ENCODE measurements at regions of chr2 and their contacts with region 1.

Region 1: DNA sequence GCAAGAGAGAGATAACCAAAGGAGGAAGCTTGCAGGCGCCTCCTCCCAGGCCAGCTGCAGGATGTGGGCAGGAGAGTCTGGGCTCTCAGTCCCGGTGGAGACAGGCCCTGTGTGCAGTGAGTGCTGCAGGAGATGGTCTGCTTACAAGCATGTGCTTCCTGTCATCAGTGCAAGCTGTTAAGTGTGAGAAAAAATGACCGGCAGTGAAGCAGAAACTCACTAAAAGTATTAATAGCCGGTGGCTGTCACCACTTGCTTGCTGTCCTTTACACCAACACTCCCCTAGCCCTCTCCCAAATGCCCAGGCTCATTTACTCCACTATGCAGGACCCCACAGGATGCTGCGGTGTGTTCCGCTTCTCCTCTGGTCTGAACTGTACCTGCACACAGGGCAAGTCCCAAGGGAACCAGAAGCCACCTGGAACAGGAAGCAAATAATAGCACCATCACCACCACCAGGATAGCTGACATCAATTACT is 435.6 kb upstream of the HS6ST1 start:
- DNase-seq: no peak
- H3K4me3 ChIP-seq: no peak overlapping the region
- H3K27ac ChIP-seq: no peak overlapping the region
- H3K4me1 ChIP-seq: peaks cover 0 to 2% (median 0%) of the 10 kb centered on the region in 4 experiments; a peak in 1 of 7 replicates
- H3K27me3 ChIP-seq: no peaks in the 10 kb centered on the region
- CTCF ChIP-seq: no peak
- EP300 ChIP-seq: no peak
- POLR2A ChIP-seq: no peak
- RAD21 ChIP-seq: no peak

Region 2: GRCh38 chr2:128736689-128737545 is 17.4 kb before region 1 on chr2:
- CTCF ChIA-PET with region 1: interaction called, 13 read pairs
- POLR2A ChIA-PET with region 1: no interaction called
- DNase-seq: peak; percentile 50 to 95
- H3K4me3 ChIP-seq: peak overlapping the region; percentile 22 to 57 (median 36); a peak in 7 of 8 replicates
- H3K27ac ChIP-seq: no peak overlapping the region
- H3K4me1 ChIP-seq: no peaks in the 10 kb centered on the region; a peak in 3 of 7 replicates
- H3K27me3 ChIP-seq: peaks cover 0 to 11% (median 9%) of the 10 kb centered on the region in 4 experiments; a peak in 6 of 7 replicates
- CTCF ChIP-seq: peak; percentile 89 to 94 (median 93)
- EP300 ChIP-seq: no peak
- POLR2A ChIP-seq: no peak
- RAD21 ChIP-seq: peak; percentile 86 to 90

Region 3: GRCh38 chr2:128765811-128766210 is 11.5 kb after region 1 on chr2:
- CTCF ChIA-PET with region 1: interaction called, 13 read pairs
- POLR2A ChIA-PET with region 1: no interaction called
- DNase-seq: peak in 1 of 2 experiments; percentile 29
- H3K4me3 ChIP-seq: no peak overlapping the region
- H3K27ac ChIP-seq: no peak overlapping the region
- H3K4me1 ChIP-seq: peaks cover 0 to 7% (median 0%) of the 10 kb centered on the region in 4 experiments; a peak in 2 of 7 replicates
- H3K27me3 ChIP-seq: no peaks in the 10 kb centered on the region
- CTCF ChIP-seq: no peak
- EP300 ChIP-seq: no peak
- POLR2A ChIP-seq: no peak
- RAD21 ChIP-seq: no peak

Region 4: DNA sequence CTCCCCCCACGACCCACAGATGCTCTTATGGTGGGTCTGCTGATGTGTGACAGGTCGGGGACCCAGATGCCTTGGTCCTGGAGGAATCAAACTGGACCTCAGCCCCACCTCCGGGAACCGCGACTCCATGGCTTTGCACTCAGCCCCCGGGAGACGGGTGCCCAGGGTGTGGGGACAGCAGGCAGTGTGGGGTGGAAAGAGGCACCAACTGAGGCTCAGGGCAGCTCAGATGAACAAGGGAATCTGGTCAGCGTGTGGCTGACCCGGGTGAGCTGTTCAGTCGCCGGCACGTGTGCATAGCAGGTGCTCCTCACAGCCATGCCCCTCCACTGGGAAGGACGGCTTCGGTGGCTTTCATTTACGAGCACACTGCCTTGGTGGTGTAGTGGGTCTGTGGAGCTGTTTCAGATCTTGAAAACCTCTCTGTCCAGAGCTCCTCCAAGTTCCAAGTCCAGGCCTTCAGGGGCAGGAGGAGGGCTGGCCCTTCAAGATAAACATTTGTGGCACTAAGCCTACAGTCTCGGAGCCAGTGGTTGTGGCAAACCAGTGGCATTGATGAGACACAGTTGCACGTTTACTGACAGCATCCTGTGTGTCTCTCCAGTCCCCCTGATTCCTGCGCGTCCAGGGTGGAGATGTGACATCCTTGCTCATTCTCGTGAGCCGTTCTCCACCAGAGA is 35.6 kb after region 1 on chr2:
- CTCF ChIA-PET with region 1: interaction called, 10 read pairs
- POLR2A ChIA-PET with region 1: no interaction called
- DNase-seq: peak in 1 of 2 experiments; percentile 33
- H3K4me3 ChIP-seq: no peak overlapping the region
- H3K27ac ChIP-seq: no peak overlapping the region
- H3K4me1 ChIP-seq: peaks cover 3 to 8% (median 5%) of the 10 kb centered on the region in 4 experiments; a peak in 6 of 7 replicates
- H3K27me3 ChIP-seq: peaks cover 0 to 4% (median 0%) of the 10 kb centered on the region in 4 experiments; a peak in 1 of 7 replicates
- CTCF ChIP-seq: no peak
- EP300 ChIP-seq: no peak
- POLR2A ChIP-seq: no peak
- RAD21 ChIP-seq: no peak